ENCODE measurements at regions of chr11 and their contacts with region 1.

Region 1: DNA sequence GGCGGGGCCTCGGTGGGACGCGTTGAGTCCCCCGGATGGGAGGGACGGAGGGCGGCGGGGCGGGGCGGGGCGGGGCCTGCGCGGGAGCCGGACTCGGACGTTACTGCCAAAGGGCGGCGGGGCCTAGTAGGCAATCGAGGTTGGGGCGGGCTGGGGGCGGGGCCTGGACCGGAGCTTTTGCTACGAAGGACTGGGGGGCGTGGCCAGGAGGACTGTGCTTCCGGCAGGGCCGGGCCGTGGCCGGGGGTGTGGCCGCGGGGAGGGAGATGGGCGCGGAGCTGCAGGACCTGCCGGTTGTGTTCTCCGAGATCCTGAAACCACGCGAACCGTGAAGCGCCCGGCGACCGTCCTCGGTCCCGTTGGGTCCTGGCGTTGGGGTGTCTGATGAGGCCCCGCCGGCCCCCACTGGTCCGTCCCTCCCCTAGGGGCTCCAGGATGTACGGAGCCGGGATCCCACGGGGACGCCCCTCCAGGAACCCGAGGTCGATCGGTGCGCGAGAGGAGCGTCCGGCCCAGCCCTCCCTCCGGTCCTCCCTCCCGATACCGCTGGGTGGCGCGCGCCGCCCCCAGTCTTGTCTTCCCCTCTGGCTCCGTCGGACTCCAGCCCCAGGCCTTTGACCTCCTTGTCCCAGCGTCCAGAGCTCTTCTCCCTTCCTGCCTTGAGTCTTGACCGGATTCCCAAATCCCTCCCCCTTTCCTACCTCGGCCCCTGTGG is 648 bp upstream of the NUDT8 start:
- DNase-seq: peak; percentile 96
- H3K4me3 Mint-ChIP-seq: peak overlapping the region; percentile 85
- H3K27ac Mint-ChIP-seq: peak overlapping the region; percentile 65
- H3K4me1 Mint-ChIP-seq: peaks cover 5% of the 10 kb centered on the region
- H3K27me3 Mint-ChIP-seq: no peaks in the 10 kb centered on the region

Region 2: DNA sequence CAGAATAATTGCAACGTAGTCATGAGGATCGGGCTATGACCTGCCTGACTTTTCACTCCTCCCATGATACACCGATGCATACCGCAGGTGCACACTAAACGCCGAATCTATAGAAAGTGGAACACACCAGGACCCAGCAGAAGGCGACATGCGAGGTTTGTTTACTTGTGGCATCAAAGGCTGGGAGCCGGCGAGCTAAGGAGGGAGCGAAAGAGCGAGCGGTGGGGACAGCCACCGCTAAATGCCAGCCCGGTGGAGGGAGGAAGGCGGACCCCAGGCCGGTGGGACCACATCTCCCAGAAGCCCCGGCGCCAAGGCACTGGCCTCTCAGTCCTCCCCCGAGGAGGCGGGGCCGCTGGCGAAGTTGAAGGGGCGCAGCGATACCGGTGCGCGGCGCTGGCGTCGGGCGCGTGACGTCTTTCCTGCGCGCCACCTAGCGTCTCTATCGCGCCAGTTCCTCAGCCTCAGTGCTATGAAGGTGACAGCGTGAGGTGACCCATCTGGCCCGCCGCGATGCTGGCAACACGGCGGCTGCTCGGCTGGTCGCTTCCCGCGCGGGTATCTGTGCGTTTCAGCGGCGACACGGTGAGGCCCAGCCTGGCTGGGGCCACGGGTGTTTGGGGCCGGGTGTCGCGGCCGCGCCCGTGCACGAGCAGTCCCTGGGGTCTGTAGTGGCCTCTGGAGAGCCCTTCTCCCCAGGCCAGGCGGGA is 23.7 kb before region 1 on chr11 and contains the start of gene NDUFV1:
- CTCF ChIA-PET with region 1: interaction called, 3 read pairs
- intact Hi-C with region 1: loop called (anchors 1 kb)
- DNase-seq: peak; percentile 97
- H3K4me3 Mint-ChIP-seq: peak within 1 kb of the TSS; percentile 90
- H3K27ac Mint-ChIP-seq: peak within 1 kb of the TSS; percentile 85
- H3K4me1 Mint-ChIP-seq: peaks cover 17% of the 10 kb centered on the region
- H3K27me3 Mint-ChIP-seq: peaks cover 6% of the 10 kb centered on the region
- total RNA-seq, gene NDUFV1: 347 to 356 TPM

Region 3: GRCh38 chr11:67648140-67649123 is 18.0 kb after region 1 on chr11:
- CTCF ChIA-PET with region 1: interaction called, 10 read pairs
- intact Hi-C with region 1: no loop called
- DNase-seq: peak; percentile 69
- H3K4me3 Mint-ChIP-seq: no peak overlapping the region
- H3K27ac Mint-ChIP-seq: no peak overlapping the region
- H3K4me1 Mint-ChIP-seq: peaks cover 32% of the 10 kb centered on the region
- H3K27me3 Mint-ChIP-seq: peaks cover 2% of the 10 kb centered on the region

Region 4: DNA sequence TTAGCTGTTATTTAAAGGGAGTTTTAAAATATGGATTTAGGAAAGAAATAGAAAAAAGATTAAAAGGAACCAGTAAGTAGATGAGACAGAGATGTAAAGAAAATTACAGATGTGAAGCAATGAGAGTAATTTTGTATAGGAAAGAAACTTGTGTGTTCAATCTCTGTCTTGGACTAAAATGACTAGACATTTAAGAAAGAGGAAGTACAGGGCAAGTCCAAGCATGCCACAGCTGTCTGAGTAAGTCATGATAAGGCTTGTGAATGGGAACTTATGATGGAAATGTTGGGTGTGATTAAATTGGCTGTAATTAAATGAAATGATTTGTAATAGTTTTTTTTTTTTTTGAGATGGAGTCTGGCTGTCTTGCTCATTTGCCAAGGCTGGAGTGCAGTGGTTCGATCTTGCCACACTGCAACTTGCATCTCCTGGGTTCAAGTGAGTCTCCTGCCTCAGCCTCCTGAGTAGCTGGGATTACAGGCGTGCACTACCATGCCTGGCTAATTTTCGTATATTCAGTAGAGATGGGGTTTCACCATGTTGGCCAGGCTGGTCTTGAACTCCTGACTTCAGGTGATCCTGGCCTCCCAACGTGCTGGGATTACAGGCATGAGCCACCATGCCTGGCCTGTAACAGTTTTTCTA is 26.0 kb after region 1 on chr11:
- CTCF ChIA-PET with region 1: interaction called, 24 read pairs
- intact Hi-C with region 1: loop called (anchors 1 kb)
- DNase-seq: peak; percentile 41
- H3K4me3 Mint-ChIP-seq: no peak overlapping the region
- H3K27ac Mint-ChIP-seq: no peak overlapping the region
- H3K4me1 Mint-ChIP-seq: peaks cover 10% of the 10 kb centered on the region
- H3K27me3 Mint-ChIP-seq: no peaks in the 10 kb centered on the region

Measured in activated naive CD4-positive, alpha-beta T cell treated with anti-CD3 and anti-CD28 coated beads for 36 hours (primary cell).